Cardiac septum (tissue), 1 donor: ENCODE measurements at regions of chr2 and their contacts with region 1.

Region 1: GRCh38 chr2:20525041-20526035 is 78.5 kb downstream of the RHOB start:
- DNase-seq: no peak

Region 2: DNA sequence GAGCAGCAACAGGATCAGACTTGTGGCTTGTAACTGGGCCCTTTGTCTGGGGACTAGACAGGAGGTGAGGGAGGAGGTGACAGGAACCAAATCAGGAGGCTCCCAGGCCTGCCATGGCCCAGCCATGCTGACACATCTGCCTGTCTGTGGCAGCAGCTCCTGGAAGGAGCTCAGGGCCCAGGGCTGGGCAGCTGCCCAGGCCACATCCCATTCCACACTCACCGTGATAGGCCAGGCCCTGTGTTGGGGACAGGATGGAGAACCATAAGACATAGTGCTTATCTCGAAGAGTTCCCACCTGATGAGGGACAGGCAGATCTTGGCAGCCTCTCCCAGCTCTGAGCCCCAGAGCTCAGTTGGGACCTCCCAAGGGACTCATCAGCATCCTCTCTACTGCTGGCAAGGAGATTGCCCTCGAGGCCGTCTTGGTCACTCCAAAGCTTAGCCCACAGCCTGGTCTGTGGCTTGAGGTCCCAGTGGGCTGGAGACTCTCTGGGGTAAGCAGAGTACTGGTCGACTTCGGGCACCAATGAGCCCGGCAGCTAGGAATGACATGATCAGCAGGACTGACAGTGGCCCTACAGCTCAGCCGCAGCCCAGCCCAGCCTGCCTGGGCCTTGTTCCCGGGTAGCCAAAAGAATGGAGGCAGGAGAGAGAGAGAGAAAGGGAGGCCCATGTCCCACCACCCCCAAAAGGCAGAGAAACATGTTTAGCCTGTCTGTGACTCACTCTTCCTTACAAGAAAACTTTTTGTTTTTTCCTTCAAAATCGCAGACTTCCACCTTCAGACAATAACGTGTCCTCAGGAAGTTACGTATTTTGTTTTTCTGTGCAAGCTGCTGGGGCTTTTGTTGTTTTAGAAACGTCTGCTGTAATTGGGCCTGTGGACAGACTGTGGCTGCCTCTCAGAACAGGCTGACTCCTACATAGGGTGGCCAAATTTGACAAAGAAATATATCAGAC is 43.4 kb after region 1 on chr2:
- intact Hi-C with region 1: loop called (anchors 2 kb)
- DNase-seq: no peak

Region 3: DNA sequence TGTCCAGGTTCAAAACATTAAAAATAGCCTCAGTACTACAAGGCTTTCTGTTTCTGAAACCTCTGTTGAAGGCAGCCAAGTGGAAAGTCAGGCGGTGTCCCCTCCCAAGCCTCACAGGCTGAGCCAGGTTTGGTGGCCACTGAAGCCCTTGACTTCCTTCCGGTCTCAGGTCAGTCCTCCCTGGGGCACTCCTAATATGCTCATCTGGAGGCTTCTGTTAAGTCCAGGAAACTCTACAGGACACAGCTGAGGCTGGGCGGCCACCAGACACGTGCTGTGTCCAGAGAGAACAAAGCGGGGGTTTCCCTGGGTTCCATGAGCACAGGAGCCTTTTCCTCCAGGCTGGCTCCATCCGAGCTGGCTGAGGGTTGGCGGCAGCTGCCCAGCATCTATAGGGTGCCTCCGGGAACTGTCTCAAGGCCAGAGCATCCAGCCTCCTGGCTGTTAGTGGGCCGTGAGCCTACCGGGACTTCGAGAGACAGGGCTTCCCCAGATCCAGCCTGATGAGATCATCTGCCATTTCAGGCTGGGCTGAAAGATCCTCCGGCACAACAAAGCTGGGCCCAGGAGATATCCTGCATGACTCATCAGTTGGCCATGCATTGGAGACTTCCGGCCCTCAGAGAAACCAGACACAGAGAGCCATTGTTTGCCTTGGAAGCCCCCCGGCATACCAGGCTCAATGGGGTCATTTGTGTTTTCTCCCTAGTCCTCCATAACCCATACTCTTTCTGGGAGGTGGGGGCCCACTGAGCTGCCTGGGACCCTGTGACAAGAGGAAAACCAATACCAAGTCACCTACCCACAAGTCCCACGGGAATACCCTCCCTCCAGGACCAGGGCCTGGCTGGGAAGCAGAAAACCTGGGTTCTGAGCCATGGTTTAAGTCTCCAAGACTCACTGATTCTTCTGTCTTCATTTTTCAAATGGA is 53.8 kb after region 1 on chr2:
- intact Hi-C with region 1: loop called (anchors 2 kb)
- DNase-seq: peak; percentile 90

Region 4: DNA sequence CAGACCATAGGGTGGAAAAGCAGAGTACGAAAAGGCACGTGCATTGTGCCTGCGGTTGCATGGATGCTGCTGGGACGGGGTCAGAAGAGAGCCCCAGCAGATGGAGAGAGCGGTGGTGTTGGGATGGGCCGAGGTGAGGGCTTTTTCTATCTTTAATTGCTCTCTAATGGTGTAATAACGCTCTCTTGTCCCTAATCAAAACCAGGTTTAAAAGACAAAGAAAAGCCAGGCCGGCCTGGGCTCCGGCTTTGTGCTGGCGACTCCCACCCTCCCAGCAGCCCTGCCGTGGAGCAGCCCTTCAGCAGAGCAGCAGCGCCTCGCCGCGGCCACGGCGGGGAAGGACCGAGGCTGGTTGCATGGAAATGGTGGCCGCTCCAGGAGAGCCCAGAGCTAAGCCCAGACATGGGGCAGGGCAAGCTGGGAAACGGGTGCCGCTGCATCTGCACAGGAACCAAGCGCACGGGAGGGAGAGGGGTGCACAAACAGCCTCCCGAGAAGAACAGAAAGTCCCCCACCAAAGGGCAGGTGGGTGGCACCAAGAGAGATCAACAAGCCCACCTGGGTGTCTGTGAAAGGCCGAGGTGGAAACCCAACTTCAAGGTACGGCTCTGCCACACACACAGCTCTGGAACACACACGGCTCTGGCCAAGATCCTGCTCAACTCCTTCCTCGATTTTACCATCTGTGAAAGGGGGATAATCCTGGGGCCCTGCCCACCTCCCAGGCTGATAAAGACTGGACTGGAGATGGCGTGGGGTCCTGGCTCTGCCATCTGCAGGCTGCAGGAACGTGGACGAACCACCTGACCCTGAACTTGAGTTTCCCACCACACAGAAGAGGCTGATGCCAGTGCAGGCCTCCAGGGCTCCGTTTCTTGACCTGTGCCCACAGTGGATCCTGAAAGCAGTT is 110.6 kb after region 1 on chr2:
- intact Hi-C with region 1: loop called (anchors 5 kb)
- DNase-seq: peak; percentile 91

Region 5: DNA sequence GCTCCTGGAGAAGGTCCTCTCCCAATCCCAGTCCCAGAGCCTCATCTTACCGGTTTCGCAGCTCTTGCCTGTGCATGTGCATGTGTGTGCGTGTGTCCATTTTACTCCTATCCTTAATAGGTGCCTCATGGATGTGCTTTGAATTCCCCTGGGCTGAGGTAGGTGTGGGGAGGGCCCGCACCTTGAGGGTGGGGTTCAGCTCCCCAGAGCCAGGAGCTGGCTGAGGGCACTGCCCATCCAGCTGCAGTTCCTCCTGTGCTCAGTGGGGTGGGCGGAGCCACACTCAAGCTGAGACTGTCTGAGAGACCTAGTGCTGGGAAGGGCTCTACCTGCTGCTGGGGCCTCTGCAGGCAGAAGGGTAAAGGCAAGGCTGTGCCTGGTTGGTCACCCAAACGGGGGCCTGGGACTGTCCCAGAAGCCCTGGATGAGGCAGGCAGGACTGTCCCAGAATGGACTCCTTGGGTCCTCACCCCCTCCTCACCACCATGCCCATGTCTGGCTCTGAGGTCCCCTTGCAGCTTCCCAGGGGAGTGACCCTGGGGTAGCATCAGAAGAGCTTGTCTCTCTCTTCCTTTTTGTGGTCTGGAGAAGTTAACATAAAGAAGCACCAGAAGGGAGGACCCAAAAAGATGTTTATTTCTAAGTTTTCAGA is 150.5 kb after region 1 on chr2:
- intact Hi-C with region 1: no loop called
- DNase-seq: peak; percentile 74

Region 6: GRCh38 chr2:20862850-20863249 is 337.5 kb after region 1 on chr2:
- intact Hi-C with region 1: no loop called
- DNase-seq: no peak